BJ (cell line): ENCODE measurements at regions of chr18 and their contacts with region 1.

Region 1: DNA sequence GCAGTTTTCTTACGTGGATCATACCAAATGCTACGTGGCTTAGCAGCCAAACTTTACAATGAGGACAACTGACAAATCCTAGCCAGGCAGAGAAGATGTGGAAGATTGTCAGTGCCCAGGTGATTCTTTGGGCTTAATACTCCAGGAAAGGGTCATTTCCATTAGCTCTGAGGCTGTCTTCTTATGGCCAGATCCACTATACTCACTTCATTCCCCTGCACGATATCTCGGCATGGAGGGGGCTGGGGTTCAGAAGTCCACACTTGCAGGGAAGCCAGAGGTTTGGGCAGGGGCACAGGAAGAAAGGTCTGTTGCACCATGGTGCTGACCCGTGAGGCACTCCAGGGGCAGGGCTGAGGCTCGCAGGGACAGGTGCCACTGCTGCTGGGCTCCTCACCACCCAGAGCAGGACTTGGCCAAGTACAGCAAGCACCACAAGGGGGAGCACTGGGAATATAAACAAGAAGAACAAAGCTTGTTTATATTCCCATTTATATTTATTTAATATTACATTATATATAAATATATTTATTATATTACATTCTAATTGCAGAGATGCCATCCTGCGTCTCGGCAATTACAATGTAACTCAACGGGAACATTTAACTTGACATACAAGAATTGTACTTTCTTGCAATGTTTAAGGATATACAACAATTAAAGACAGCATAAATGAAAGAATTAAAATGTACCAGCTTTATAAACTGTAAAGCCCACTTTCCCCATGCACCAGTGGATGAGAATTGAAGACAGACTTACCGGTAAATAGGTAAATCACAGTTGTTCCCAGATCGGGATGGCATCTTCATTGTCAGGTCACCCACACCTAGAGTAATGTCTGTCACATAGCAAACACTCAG is 27.2 kb downstream of the CLUL1 start:
- DNase-seq: no peak
- H3K4me3 ChIP-seq: no peak overlapping the region
- H3K27me3 ChIP-seq: no peaks in the 10 kb centered on the region; the same call in none of the 2 replicates
- CTCF ChIP-seq: peak; percentile 80

Region 2: DNA sequence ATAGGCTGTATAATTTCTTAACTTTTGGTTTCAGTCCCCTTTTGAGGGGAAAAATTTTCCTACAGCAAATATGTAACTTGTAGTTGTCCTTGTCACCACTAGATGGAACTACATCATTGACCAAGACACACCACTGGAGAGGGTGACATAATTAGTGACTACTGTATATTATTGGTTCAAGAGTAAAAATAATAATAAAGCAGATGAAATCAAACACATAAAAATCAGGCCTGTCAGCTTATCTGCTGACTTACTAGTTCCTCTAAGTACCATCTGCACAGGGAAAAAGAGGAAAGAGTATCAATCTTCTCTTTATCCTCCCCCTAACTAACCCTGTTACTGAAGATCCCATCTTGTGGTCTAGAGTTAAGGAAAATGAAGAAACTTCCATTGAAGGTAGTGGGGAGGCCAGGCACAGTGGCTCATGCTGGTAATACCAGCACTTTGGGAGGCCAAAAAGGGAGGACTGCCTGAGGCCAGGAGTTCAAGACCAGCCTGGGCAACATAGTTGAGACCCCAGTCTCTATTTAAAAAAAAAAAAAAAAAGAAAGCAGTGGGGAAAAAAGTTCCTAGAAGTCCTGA is 118.0 kb after region 1 on chr18:
- CTCF ChIA-PET with region 1: interaction called, 14 read pairs
- POLR2A ChIA-PET with region 1: no interaction called
- DNase-seq: peak; percentile 3
- H3K4me3 ChIP-seq: no peak overlapping the region
- H3K27me3 ChIP-seq: no peaks in the 10 kb centered on the region
- CTCF ChIP-seq: peak; percentile 63

Region 3: GRCh38 chr18:824179-824578 is 200.2 kb after region 1 on chr18:
- CTCF ChIA-PET with region 1: interaction called, 20 read pairs
- POLR2A ChIA-PET with region 1: no interaction called
- DNase-seq: no peak
- H3K4me3 ChIP-seq: no peak overlapping the region
- H3K27me3 ChIP-seq: no peaks in the 10 kb centered on the region
- CTCF ChIP-seq: no peak

Region 4: DNA sequence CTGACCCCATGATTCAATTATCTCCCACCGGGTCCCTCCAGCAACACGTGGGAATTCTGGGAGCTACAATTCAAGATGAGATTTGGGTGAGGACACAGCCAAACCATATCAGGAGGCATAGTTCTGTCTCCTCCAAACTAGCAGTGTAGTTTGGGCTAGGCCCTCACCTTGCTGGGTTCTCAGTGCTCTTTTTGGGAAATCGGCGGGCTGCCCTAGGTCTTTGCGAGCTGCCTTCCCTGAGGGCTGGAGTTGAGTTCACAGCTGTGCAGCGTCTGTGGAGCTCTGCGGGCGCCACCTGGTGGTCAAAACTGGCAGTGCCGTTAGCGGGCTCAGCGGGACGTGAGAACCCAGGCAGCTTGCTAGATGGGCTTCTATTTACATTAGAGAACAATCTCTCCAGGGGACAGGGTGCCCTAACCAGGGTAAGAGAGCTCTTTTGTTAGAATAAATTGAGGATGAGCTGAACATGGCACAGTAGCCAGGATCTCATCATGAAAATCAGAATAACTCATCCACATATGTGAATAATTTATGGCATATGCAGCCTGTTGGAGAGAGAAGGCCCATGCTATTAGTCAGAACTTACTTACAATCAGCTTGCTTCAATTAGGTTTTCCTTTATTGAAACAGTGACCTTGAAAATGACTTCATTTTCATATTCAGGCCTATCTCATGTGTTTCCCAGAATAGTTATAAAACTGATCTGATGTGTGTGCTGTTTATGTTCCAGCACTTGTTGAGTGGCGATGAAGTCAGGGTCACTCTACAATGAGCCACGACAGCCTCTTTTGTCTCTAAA is 215.4 kb after region 1 on chr18:
- CTCF ChIA-PET with region 1: interaction called, 134 read pairs
- POLR2A ChIA-PET with region 1: no interaction called
- DNase-seq: peak; percentile 53
- H3K4me3 ChIP-seq: no peak overlapping the region
- H3K27me3 ChIP-seq: no peaks in the 10 kb centered on the region
- CTCF ChIP-seq: peak; percentile 99

Region 5: DNA sequence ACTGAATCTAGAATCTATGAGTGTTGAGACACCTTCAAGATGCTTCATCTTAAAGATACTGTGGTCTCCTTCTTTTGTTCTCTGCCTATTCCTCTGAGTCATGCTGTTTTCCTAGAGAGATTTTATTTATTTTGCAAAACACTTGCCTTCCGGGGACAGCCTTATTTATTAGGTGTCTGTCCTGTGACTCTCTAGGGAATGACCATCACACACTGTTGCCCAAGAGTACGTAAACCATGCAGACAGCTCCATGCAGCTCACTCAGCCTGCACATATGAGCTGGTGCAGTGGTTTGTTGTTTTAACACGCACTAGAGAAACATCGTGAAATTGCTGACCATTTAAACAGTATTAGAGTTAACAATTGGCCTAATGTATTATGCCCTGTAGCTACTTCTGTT is 268.3 kb after region 1 on chr18:
- CTCF ChIA-PET with region 1: no interaction called
- POLR2A ChIA-PET with region 1: no interaction called
- DNase-seq: no peak
- H3K4me3 ChIP-seq: no peak overlapping the region
- H3K27me3 ChIP-seq: no peaks in the 10 kb centered on the region
- CTCF ChIP-seq: no peak

Region 6: GRCh38 chr18:923141-923866 is 299.3 kb after region 1 on chr18:
- CTCF ChIA-PET with region 1: no interaction called
- POLR2A ChIA-PET with region 1: no interaction called
- DNase-seq: no peak
- H3K4me3 ChIP-seq: no peak overlapping the region
- H3K27me3 ChIP-seq: no peaks in the 10 kb centered on the region
- CTCF ChIP-seq: no peak